ENCODE measurements at regions of chr12 and their contacts with region 1.

Region 1: DNA sequence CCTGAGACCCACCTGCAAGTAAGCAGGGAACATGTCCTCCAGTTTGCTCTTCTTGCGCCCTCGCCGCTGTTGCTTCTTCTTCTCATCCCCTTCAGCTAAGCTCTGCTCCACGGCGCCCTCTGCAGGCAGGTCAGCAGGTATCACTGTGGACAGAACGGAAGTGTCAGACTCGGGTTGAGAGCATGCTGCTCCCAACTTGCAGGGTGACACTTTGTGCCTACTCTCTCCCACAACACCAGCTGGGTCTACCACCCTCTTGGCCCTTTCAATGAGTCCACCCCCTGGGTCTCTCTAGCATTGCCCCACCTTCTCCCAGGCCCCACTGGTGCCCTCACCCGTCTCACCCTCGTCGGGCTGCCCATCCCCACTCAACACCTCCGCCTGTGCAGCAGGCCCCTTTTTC is 16.7 kb downstream of the KMT2D start:
- DNase-seq: no peak
- ATAC-seq: peak; percentile 87
- H3K4me3 ChIP-seq: no peak overlapping the region
- H3K27ac ChIP-seq: no peak overlapping the region
- H3K4me1 ChIP-seq: no peaks in the 10 kb centered on the region
- H3K27me3 ChIP-seq: no peaks in the 10 kb centered on the region
- CTCF ChIP-seq: peak; percentile 60 to 82 (median 77)
- EP300 ChIP-seq: no peak
- POLR2A ChIP-seq: no peak
- RAD21 ChIP-seq: peak; percentile 38

Region 2: DNA sequence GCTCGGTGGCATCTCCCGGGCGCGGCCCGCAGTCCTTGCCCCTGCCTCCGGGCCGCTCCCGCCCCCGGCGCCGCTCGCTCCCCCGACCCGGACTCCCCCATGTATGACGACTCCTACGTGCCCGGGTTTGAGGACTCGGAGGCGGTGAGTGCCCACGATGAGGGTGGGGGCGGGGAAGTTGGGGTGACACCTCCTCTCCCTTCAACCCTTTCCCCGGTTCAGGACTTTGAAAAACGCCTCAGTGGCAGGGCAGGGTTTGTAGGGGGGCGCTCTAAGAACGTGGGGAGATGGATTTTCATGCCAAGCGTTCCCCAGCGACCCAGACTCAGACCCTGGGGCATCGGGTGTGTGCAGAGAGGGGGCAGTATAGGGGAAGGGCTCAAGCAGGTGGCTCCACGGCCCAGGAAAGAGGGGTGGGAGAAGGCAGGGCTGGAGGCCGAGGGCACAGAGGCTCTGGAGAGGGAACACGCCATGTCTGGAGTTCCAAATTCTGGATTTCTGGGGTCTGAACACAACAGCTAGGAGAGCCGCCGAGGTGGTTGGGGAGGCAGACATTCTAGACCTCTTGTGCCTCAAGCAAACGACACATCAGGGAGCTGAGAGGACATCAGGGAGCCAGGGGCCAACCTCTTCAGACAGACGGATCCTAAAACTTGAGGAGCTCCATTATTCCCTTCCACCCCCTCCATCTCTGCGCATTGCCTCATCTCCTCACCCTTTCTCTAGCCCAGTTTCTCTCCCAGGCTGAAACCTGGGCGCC is 224.8 kb before region 1 on chr12:
- CTCF ChIA-PET with region 1: no interaction called
- POLR2A ChIA-PET with region 1: no interaction called
- RAD21 ChIA-PET with region 1: no interaction called
- SMC1A ChIA-PET with region 1: no interaction called
- in situ Hi-C with region 1: no loop called
- intact Hi-C with region 1: no loop called
- DNase-seq: no peak
- ATAC-seq: no peak
- H3K4me3 ChIP-seq: peak overlapping the region; percentile 48; the same call in 1 of the 2 replicates
- H3K27ac ChIP-seq: no peak overlapping the region
- H3K4me1 ChIP-seq: peaks cover 7% of the 10 kb centered on the region
- H3K27me3 ChIP-seq: peaks cover 3% of the 10 kb centered on the region in 2 experiments; a peak in 3 of 4 replicates
- CTCF ChIP-seq: peak in 1 of 3 experiments; percentile 5; a peak in 1 of 6 replicates
- EP300 ChIP-seq: no peak
- POLR2A ChIP-seq: no peak
- RAD21 ChIP-seq: no peak

Region 3: GRCh38 chr12:49018261-49019119 is 25.4 kb before region 1 on chr12 and contains the start of gene PRKAG1:
- CTCF ChIA-PET with region 1: interaction called, 11 read pairs
- POLR2A ChIA-PET with region 1: no interaction called
- RAD21 ChIA-PET with region 1: interaction called, 3 read pairs
- SMC1A ChIA-PET with region 1: interaction called, 3 read pairs
- in situ Hi-C with region 1: no loop called
- intact Hi-C with region 1: no loop called
- DNase-seq: peak; percentile 77
- ATAC-seq: peak; percentile 90
- H3K4me3 ChIP-seq: peak within 1 kb of the TSS; percentile 93
- H3K27ac ChIP-seq: peak within 1 kb of the TSS; percentile 93
- H3K4me1 ChIP-seq: 0 out of 2 replicates have a peak, but pooled peaks cover 3% of the 10 kb centered on the region
- H3K27me3 ChIP-seq: no peaks in the 10 kb centered on the region
- CTCF ChIP-seq: peak; percentile 57 to 71 (median 68)
- EP300 ChIP-seq: no peak
- POLR2A ChIP-seq: peak; percentile 90
- RAD21 ChIP-seq: peak; percentile 36; the same call in 1 of the 2 replicates
- polyA plus RNA-seq, gene PRKAG1: 61.5 to 70.9 TPM

Region 4: DNA sequence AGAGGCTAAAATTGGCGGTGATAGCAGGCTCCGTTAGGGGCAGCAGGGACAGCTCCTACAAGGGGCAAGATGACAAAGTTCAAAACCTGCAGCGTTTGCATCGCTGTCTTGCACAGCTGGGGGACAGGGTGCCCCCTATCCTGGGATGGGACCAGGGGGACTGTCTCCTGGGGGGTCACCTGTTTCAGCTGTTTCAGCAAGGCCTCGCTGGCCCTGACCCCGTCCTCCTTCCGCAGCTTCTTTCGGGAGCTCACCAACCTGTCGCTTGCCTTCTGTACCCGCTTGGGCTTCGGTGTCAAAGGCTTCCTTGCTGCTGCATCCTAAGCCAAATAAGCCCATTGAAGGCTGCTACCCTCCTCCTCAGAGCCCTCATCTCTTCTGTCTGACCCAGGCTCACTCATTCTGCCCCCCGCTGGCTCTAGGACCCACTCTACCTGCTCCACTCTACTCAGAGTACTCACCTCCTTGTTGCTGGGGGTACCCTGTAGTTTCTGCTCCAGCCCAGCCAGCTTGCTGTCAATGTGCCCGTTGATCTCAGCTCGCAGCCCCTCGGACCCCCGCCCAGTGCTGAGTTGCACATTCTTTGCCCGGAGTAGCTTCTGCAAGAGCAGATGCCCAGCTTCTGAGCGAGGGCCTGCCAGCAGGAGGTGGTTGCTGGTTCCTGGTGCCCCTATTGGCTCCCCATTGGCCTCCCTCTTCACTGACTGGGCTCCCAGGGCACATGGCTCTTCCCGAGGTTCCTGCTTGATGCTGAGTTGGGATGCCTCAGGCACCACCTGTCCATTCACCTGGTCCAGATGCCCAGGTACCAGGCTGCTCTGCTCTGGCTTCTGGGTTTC is 12.9 kb before region 1 on chr12:
- CTCF ChIA-PET with region 1: interaction called, 13 read pairs
- POLR2A ChIA-PET with region 1: interaction called, 9 read pairs
- RAD21 ChIA-PET with region 1: no interaction called
- SMC1A ChIA-PET with region 1: no interaction called
- in situ Hi-C with region 1: no loop called
- intact Hi-C with region 1: no loop called
- DNase-seq: no peak
- ATAC-seq: no peak; the same call in 2 of the 3 replicates
- H3K4me3 ChIP-seq: no peak overlapping the region
- H3K27ac ChIP-seq: no peak overlapping the region
- H3K4me1 ChIP-seq: no peaks in the 10 kb centered on the region
- H3K27me3 ChIP-seq: no peaks in the 10 kb centered on the region
- CTCF ChIP-seq: no peak
- EP300 ChIP-seq: no peak
- POLR2A ChIP-seq: peak; percentile 57; the same call in 1 of the 2 replicates
- RAD21 ChIP-seq: no peak